Activated CD8-positive, alpha-beta T cell treated with anti-CD3 and anti-CD28 coated beads, Interleukin-2, amount 10 ng/mL, durations not matched to agents 7 days and 5 days (primary cell): ENCODE measurements at regions of chr14 and their contacts with region 1.

Region 1: DNA sequence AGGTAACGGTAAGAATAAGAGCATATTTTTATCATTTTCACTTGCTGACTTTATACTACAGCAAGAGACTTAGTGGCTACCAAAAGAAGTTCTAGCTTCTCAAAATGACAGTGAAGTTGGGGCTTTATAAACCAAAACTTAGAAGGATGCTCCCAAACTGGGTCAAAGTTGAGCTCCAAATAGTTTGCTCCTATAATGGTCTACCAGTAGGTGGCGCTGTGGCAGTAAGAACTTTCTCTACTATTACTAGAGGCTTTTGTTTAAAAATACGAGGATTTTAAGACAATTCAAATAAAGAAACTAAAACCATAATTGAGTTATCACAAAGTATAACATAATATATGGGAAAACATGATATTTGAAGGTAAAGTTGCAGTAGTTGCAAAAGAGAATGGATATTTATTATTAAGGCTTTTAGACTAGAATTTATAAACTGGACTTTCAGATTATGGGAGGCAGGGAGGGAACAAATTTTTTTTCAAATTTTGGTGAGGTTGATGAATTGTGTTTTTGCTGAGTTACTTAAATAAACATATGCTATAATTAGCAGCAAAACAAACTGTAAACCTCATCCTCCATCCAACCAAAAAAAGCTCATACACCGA is 75.0 kb downstream of the TGFB3 start:
- DNase-seq: peak; percentile 82
- ATAC-seq: peak; percentile 70
- H3K4me3 Mint-ChIP-seq: no peak overlapping the region
- H3K27ac Mint-ChIP-seq: no peak overlapping the region
- H3K4me1 Mint-ChIP-seq: no peaks in the 10 kb centered on the region
- H3K27me3 Mint-ChIP-seq: no peaks in the 10 kb centered on the region

Region 2: DNA sequence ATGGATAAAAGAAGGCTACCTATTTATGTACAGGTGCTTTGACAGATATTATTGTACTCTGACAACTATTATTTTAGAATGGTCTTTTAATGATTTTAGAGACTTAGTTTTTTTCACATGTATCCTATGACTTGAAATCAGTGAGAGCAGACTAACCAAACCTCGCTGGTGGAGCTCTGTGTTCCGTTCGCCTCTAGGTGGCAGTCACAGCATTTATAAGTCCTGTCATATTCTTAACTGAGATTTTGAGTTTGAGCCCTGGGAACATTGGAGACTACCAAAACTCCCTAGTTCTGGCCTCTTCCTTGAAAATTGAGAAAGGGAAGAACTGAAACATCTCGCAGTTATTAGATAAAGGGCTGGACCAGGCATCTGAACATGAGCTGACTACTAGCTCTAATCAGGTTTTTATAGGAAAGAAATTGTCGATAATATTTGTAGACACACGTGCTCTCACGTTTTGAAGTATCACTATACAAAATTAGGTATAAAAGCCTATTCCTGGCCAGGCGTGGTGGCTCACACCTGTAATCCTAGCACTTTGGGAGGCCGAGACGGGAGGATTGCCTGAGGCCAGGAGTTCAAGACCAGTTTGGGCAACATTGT is 197.5 kb before region 1 on chr14:
- CTCF ChIA-PET with region 1: interaction called, 46 read pairs
- POLR2A ChIA-PET with region 1: no interaction called
- DNase-seq: peak; percentile 78
- ATAC-seq: peak; percentile 86
- H3K4me3 Mint-ChIP-seq: no peak overlapping the region
- H3K27ac Mint-ChIP-seq: no peak overlapping the region
- H3K4me1 Mint-ChIP-seq: no peaks in the 10 kb centered on the region
- H3K27me3 Mint-ChIP-seq: no peaks in the 10 kb centered on the region

Region 3: GRCh38 chr14:75896341-75896740 is 10.4 kb before region 1 on chr14:
- CTCF ChIA-PET with region 1: interaction called, 11 read pairs
- POLR2A ChIA-PET with region 1: no interaction called
- DNase-seq: no peak
- ATAC-seq: no peak
- H3K4me3 Mint-ChIP-seq: no peak overlapping the region
- H3K27ac Mint-ChIP-seq: no peak overlapping the region
- H3K4me1 Mint-ChIP-seq: no peaks in the 10 kb centered on the region
- H3K27me3 Mint-ChIP-seq: no peaks in the 10 kb centered on the region

Region 4: GRCh38 chr14:75917322-75917945 is 10.7 kb after region 1 on chr14:
- CTCF ChIA-PET with region 1: interaction called, 28 read pairs
- POLR2A ChIA-PET with region 1: interaction called, 3 read pairs
- DNase-seq: no peak
- ATAC-seq: no peak
- H3K4me3 Mint-ChIP-seq: no peak overlapping the region
- H3K27ac Mint-ChIP-seq: no peak overlapping the region
- H3K4me1 Mint-ChIP-seq: no peaks in the 10 kb centered on the region
- H3K27me3 Mint-ChIP-seq: no peaks in the 10 kb centered on the region

Region 5: DNA sequence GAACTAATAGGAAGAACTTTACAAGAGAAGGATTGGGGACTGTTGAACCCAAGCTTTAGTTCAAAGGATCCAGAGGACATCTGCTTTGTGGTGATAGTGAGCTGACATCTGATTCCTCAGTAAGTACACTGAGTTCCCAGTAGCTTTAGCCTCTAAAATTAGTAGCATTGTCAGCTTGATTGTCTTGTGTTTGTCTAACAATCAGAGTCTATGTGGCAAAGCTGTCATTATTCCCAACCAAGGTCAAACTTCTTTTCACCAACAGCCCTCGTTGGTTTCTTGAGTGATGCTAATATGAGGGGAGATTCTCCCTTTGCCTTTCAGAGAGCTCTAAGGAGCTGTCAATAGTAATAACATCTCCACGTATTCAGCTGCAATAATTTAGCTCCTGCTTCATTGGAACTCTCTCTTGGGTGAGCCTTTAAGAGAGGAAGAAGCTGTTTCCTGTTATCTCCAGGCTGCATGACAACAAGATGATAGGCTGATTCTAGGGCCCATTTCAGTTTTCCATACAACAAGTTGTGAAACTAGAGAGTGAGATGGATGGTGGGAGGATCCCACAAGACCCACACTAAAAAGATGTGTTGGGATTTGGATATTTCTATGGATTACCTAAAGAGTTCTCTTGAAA is 28.3 kb after region 1 on chr14:
- CTCF ChIA-PET with region 1: interaction called, 15 read pairs
- POLR2A ChIA-PET with region 1: no interaction called
- DNase-seq: no peak
- ATAC-seq: no peak
- H3K4me3 Mint-ChIP-seq: no peak overlapping the region
- H3K27ac Mint-ChIP-seq: no peak overlapping the region
- H3K4me1 Mint-ChIP-seq: no peaks in the 10 kb centered on the region
- H3K27me3 Mint-ChIP-seq: no peaks in the 10 kb centered on the region

Region 6: GRCh38 chr14:75960231-75960630 is 53.5 kb after region 1 on chr14:
- CTCF ChIA-PET with region 1: interaction called, 12 read pairs
- POLR2A ChIA-PET with region 1: no interaction called
- DNase-seq: peak; percentile 12
- ATAC-seq: no peak
- H3K4me3 Mint-ChIP-seq: no peak overlapping the region
- H3K27ac Mint-ChIP-seq: no peak overlapping the region
- H3K4me1 Mint-ChIP-seq: no peaks in the 10 kb centered on the region
- H3K27me3 Mint-ChIP-seq: no peaks in the 10 kb centered on the region

Region 7: DNA sequence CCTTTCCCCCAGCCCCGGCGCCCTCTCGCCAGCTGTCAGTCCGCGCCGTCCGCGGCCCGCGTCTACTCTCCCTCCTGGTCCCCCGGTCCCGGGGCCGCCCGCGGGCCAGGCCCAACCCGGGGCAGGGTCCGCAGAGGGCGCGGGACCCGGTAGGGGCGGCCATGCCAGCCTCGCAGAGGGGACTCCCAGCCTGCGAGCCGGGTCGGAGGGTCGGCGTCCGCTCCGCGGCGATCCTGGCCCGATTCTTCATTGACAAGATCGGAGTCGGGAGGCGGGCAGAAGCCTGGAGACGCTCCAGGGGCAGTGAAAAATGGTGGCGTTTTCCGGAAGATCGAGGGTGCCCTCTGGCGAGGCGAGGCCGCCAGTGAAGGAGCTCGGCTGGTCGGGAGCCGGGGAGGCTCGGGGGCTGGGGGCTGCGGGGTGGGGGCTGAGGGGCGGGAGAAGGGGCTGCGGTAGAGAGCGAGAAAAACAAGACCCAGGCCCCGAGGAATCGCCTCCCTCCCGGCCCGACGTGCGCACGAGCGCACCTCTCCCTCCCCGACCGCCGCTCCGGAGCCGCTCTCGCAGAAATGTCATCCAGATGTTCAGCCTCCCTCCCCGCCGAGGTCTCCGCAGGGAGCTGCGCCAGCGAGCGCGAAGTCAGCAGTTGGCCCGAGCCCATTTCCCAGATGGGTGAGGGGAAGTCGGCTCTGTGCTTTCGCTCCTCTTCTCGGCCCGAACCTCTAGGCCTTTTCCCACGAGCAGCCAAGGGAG is 75.7 kb after region 1 on chr14:
- CTCF ChIA-PET with region 1: interaction called, 183 read pairs
- POLR2A ChIA-PET with region 1: interaction called, 3 read pairs
- DNase-seq: peak; percentile 80
- ATAC-seq: peak; percentile 70
- H3K4me3 Mint-ChIP-seq: peak overlapping the region; percentile 69
- H3K27ac Mint-ChIP-seq: no peak overlapping the region
- H3K4me1 Mint-ChIP-seq: peaks cover 49% of the 10 kb centered on the region
- H3K27me3 Mint-ChIP-seq: peaks cover 11% of the 10 kb centered on the region